ENCODE measurements at regions of chr10 and their contacts with region 1.

Region 1: DNA sequence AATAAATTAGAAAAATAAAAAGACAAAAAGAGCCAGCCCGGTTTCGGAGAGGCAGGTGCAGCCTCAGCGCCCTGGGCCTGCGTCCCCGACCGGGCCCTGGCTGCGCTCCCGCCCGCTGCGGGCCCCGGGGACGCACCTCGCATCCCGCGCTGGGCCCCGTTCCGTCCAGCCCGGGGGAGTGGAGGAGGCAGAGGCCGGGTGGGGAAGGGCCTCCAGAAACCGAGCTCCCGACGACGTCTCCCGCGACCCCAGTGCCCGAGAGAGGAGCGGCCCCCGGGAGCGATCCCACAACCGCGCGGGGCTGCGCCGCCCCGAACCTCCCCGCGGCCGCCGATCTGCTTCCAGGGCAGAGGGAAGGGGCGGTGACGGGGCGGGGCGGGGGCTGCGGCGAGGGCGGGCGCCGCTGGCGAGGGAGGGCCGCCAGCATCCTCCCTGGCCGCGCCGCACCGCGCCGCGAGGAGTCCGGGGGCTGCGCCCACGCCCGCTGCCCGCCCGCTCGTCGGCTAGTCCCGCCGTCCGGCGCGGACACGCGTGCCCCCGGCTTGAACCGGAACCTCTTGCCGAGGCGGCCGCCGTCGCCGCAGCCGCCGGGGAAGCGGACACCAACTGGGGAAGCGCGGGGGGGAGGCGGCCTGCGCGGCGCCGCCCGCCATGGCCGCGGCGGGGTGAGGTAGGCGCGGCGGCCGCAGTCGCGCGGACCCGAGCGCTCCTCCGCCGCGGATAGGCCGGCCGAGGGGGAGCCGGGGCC is at the start of gene CCNY:
- DNase-seq: peak; percentile 79
- ATAC-seq: peak; percentile 86
- H3K4me3 Mint-ChIP-seq: peak within 1 kb of the TSS; percentile 88
- H3K27ac Mint-ChIP-seq: peak within 1 kb of the TSS; percentile 74
- H3K4me1 Mint-ChIP-seq: peaks cover 63% of the 10 kb centered on the region
- H3K27me3 Mint-ChIP-seq: no peaks in the 10 kb centered on the region
- CTCF ChIP-seq: no peak
- total RNA-seq, gene CCNY: 68.5 and 69.2 TPM in 2 replicates

Region 2: DNA sequence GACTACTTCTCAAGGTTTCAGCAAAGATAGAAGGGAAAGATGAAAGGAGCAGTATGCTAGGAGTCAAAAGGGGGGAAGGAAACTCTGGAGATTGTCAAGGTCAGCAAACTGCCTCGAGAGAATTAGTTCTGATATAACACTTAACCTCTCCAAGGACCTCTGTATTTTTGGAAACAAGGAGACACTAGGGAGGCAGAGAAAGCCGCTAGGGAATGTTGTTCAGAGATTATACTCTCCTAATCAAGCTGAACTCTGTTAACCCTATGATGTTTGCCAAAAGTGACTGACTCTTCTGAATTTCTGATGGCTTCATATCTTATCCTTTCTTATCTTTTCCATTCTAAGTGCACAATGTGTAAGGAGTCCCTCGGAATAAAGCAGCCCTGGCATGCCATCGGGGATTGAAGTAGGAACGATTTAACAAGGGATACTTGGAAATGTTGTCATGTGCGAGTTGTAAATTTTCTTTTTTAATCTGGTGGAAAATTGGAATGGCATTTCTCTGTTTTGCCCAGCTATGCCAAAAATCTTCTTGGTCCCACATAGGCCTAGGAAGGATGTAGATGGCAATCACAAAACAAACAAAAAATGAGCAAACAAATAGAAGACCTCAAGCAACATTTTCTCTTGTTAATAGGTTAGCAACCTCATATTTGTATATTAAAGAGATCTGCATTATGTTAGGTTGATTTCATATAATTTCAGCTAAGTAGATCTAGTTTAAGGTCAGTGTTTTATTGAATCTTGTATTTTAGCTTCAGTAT is 182.4 kb before region 1 on chr10:
- CTCF ChIA-PET with region 1: no interaction called
- POLR2A ChIA-PET with region 1: no interaction called
- intact Hi-C with region 1: loop called (anchors 1 kb)
- DNase-seq: no peak
- ATAC-seq: no peak
- H3K4me3 Mint-ChIP-seq: no peak overlapping the region
- H3K27ac Mint-ChIP-seq: no peak overlapping the region
- H3K4me1 Mint-ChIP-seq: peaks cover 34% of the 10 kb centered on the region
- H3K27me3 Mint-ChIP-seq: no peaks in the 10 kb centered on the region
- CTCF ChIP-seq: no peak

Region 3: GRCh38 chr10:35300063-35300699 is 36.1 kb before region 1 on chr10:
- CTCF ChIA-PET with region 1: no interaction called
- POLR2A ChIA-PET with region 1: no interaction called
- intact Hi-C with region 1: loop called (anchors 1 kb)
- DNase-seq: peak; percentile 27
- ATAC-seq: peak; percentile 88
- H3K4me3 Mint-ChIP-seq: peak overlapping the region; percentile 32
- H3K27ac Mint-ChIP-seq: peak overlapping the region; percentile 22
- H3K4me1 Mint-ChIP-seq: peaks cover 9% of the 10 kb centered on the region
- H3K27me3 Mint-ChIP-seq: peaks cover 10% of the 10 kb centered on the region
- CTCF ChIP-seq: no peak

Region 4: GRCh38 chr10:35451151-35452016 is 115.1 kb after region 1 on chr10:
- CTCF ChIA-PET with region 1: no interaction called
- POLR2A ChIA-PET with region 1: no interaction called
- intact Hi-C with region 1: loop called (anchors 5 kb)
- DNase-seq: no peak
- ATAC-seq: peak; percentile 94
- H3K4me3 Mint-ChIP-seq: peak overlapping the region; percentile 1
- H3K27ac Mint-ChIP-seq: peak overlapping the region; percentile 73
- H3K4me1 Mint-ChIP-seq: peaks cover 80% of the 10 kb centered on the region
- H3K27me3 Mint-ChIP-seq: no peaks in the 10 kb centered on the region
- CTCF ChIP-seq: no peak

Region 5: DNA sequence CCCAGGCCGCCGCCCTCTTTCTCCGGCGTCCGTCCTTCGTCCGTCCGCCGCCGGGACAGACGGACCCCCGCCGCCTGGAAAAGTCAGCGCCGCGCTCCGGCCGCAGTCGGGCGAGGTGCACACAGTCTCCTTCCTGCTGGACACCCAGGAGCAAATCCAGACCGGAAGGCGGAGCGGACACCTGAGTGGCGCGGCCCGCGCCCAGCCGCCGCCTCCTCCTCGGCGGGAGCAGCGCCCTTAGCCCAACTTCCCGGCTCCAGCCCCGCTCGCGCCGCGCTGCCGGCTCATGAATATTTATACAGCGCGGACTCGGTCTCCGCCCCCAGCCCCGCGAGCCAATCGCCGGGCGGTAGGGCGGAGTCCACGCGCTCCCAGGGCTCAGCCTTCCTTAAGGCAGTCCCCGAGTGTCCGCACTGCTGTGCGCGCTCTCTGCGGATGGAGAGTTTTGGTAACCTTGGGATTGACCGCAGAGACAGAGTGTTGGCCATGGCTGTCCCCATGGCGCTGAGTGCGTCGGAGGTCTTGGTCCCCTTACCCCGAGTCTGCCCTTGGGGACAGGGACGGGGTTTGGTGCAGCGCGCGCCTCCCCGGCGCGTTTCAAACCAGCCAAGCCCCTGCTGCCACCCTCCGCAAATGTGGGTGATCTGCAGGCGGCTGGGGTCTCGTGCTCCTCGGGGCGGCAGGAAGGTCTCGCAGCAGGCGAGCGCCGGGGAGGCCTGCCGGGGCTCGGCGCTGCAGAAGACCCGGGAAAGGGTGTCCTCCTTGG is 306.0 kb after region 1 on chr10 and contains the start of gene FZD8:
- CTCF ChIA-PET with region 1: no interaction called
- POLR2A ChIA-PET with region 1: no interaction called
- intact Hi-C with region 1: loop called (anchors 5 kb)
- DNase-seq: peak; percentile 69
- ATAC-seq: peak; percentile 87
- H3K4me3 Mint-ChIP-seq: peak within 1 kb of the TSS; percentile 88
- H3K27ac Mint-ChIP-seq: no peak within 1 kb of the TSS
- H3K4me1 Mint-ChIP-seq: peaks cover 30% of the 10 kb centered on the region
- H3K27me3 Mint-ChIP-seq: peaks cover 33% of the 10 kb centered on the region
- CTCF ChIP-seq: no peak
- total RNA-seq, gene FZD8: 0.17 and 0.22 TPM in 2 replicates